Activated B cell treated with CpG ODN at 0.5 μM for 24 hours (primary cell): ENCODE measurements at regions of chr6 and their contacts with region 1.

Region 1: GRCh38 chr6:125584468-125585029 is 164.9 kb upstream of the HEY2 start:
- DNase-seq: no peak
- ATAC-seq: no peak
- H3K4me3 Mint-ChIP-seq: no peak overlapping the region
- H3K27ac Mint-ChIP-seq: no peak overlapping the region
- H3K4me1 Mint-ChIP-seq: no peaks in the 10 kb centered on the region
- H3K27me3 Mint-ChIP-seq: peaks cover 11% of the 10 kb centered on the region
- CTCF ChIP-seq: no peak

Region 2: GRCh38 chr6:125597411-125598253 is 13.1 kb after region 1 on chr6:
- CTCF ChIA-PET with region 1: no interaction called
- POLR2A ChIA-PET with region 1: no interaction called
- intact Hi-C with region 1: loop called (anchors 1 kb)
- DNase-seq: no peak
- ATAC-seq: peak; percentile 54
- H3K4me3 Mint-ChIP-seq: no peak overlapping the region
- H3K27ac Mint-ChIP-seq: no peak overlapping the region
- H3K4me1 Mint-ChIP-seq: peaks cover 4% of the 10 kb centered on the region
- H3K27me3 Mint-ChIP-seq: peaks cover 2% of the 10 kb centered on the region
- CTCF ChIP-seq: no peak